Ovary (tissue), 10 donors: ENCODE measurements at regions of chr20 and their contacts with region 1.

Region 1: DNA sequence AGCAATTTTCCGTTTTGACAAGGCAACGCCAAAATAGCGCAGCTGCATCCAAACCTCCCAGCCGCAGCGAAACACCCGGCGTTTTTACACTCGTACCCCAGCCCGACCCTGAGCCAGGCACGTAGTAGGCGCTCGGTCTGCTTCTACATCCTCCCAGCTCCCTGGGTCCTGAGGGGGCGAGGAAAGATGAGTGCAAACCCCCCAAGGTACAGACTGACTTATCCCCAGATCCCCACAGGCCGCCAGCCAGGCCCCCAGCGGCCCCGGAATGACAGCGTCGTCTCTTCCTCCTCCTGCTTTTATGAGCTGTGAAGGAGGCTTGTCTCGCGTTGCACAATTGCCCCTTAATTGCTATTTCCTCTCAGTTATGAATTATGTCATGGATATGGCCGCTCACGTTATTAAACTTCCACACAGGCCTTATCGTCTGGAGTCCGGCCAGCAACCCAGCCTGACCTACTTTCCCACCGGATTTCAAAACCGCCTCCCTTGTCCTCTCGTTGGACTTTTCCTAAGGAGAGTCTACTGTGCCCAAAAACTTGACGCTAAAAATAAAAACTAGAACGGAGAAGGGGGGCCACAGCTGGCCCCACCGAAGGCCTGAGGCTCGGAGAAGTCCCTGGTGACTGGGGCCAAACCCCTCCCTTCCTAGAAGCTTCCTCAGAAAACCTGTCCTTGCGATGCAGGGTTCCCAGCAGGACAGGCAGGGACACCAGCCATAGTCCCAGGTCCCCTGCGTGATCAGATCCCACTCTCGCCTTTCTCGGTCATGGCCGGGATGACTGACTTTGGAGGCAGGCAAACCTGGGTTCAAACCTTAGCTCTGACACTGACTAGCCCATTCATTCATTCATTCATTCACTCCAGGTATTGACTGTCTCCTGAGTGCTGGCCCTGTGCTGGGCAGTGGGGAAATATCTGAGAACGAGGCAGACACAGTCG is 130.9 kb upstream of the PTPN1 start:
- DNase-seq: peak; percentile 92 to 98 (median 95)
- H3K4me3 ChIP-seq: no peak overlapping the region
- H3K27ac ChIP-seq: peak overlapping the region; percentile 41 to 49
- H3K4me1 ChIP-seq: peaks cover 15% of the 10 kb centered on the region
- H3K27me3 ChIP-seq: no peaks in the 10 kb centered on the region
- CTCF ChIP-seq: peak in 1 of 3 donors; percentile 26
- EP300 ChIP-seq: no peak
- POLR2A ChIP-seq: peak; percentile 82

Region 2: DNA sequence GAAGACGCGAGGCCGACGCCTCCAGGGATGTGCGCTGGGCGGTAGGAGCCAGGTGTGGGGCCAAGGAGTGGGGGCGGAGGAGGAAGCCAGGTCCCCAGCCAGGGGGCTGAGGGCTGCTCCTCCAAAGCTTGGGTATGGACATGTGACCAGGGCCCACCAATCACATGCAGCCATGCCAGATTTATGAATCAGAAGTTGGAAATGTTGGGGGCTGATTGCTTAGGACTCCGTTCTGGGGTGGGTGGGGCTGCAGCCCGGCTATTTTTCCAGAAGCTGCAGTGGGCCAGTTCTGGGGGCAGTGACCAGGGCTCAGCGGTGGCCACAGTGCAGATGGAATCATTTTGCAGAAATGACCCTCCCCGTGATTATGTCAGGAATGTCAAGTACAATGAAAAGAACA is 92.7 kb before region 1 on chr20:
- intact Hi-C with region 1: loop called in 1 of 4 experiments (anchors 10 kb)
- DNase-seq: peak; percentile 83 to 92 (median 84)
- H3K4me3 ChIP-seq: no peak overlapping the region
- H3K27ac ChIP-seq: peak overlapping the region; percentile 92 to 95
- H3K4me1 ChIP-seq: peaks cover 34% of the 10 kb centered on the region
- H3K27me3 ChIP-seq: no peaks in the 10 kb centered on the region
- CTCF ChIP-seq: no peak
- EP300 ChIP-seq: no peak
- POLR2A ChIP-seq: peak; percentile 49

Region 3: DNA sequence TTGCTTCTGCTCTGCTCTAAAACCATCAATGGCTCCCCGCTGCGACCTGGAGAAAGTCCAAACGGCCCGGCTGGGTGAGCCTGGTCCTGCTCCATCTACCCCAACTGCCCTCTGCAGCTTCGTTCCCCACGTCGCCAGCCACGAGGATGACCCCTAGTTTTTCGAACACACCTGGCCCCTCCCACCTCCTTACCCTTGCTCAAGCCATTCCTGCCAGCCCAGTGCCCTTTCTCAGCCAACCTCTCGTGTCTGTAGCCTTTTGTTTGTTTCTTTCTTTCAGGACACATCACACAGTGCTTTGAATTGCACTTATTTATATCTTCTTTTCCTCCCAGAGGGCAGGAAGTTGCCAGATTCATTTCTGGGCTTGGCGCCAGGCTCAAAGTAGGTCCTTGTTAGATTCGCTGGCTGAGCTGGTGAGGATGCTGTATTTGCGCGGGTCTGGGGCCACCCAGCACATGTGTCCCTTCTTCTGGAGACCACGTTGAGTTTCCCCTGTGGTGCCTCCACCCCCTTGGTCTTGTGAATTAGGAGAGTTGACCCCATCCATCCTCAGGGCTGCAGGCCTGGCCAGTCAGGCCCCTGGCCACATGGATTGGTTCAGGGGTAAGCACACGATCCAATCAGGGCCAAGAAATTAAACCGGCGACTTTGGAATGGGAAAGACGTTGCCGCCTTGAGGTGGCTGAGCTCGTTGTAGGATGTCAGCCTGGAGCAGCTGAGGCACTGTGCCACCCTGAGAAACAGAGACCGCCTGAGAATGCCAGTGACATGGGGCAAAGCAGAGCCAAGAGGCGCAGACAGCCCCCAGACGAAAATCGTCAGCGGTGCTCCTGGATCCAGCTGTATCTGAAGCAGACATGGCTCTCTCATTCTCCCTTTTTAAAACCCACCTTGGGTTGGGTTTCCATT is 32.7 kb before region 1 on chr20:
- intact Hi-C with region 1: no loop called
- DNase-seq: peak; percentile 77 to 87 (median 85)
- H3K4me3 ChIP-seq: no peak overlapping the region
- H3K27ac ChIP-seq: peak overlapping the region in 1 of 2 donors; percentile 18
- H3K4me1 ChIP-seq: peaks cover 8% of the 10 kb centered on the region
- H3K27me3 ChIP-seq: no peaks in the 10 kb centered on the region
- CTCF ChIP-seq: no peak
- EP300 ChIP-seq: no peak
- POLR2A ChIP-seq: no peak